ENCODE measurements at regions of chr2 and their contacts with region 1.

Region 1: DNA sequence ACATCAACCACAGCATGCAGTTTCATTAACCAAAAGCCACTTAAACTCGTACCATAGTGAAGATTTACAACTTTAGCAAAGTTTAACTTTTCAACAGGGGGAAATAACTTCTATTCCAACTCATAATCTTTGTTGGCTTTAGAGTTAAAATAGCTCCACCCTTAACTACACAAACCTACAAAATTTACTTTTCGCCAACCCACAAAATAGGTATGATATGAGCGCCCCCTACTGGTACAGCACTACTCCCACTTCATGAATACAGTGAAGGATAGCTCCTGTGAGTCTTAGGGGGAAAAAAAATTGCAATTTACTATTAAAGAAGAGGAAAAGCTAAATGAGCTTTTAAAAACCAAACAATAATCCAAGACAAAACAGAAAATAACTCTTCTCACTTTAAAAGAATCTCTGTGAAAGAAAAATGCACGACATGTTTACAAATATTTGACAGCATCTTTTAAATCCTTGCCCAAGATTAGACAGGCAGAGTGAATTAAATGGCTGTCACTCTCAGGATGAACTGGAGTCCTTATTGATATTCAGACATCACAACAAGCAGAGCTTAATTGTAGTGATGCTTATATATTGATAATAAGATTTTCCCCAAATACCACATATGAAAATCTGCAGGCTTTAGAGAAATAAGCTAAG is 32.2 kb downstream of the TMEFF2 start:
- DNase-seq: peak; percentile 85
- H3K4me3 ChIP-seq: no peak overlapping the region
- H3K27ac ChIP-seq: no peak overlapping the region
- H3K4me1 ChIP-seq: no peaks in the 10 kb centered on the region
- H3K27me3 ChIP-seq: no peaks in the 10 kb centered on the region
- CTCF ChIP-seq: peak; percentile 89

Region 2: GRCh38 chr2:191555092-191555742 is 607.3 kb before region 1 on chr2:
- intact Hi-C with region 1: loop called (anchors 5 kb)
- DNase-seq: peak; percentile 93
- H3K4me3 ChIP-seq: no peak overlapping the region
- H3K27ac ChIP-seq: no peak overlapping the region
- H3K4me1 ChIP-seq: no peaks in the 10 kb centered on the region
- H3K27me3 ChIP-seq: no peaks in the 10 kb centered on the region
- CTCF ChIP-seq: peak; percentile 59

Region 3: GRCh38 chr2:191811807-191812602 is 350.5 kb before region 1 on chr2:
- intact Hi-C with region 1: loop called (anchors 2 kb)
- DNase-seq: peak; percentile 60
- H3K4me3 ChIP-seq: no peak overlapping the region
- H3K27ac ChIP-seq: no peak overlapping the region
- H3K4me1 ChIP-seq: no peaks in the 10 kb centered on the region
- H3K27me3 ChIP-seq: no peaks in the 10 kb centered on the region
- CTCF ChIP-seq: peak; percentile 67

Region 4: DNA sequence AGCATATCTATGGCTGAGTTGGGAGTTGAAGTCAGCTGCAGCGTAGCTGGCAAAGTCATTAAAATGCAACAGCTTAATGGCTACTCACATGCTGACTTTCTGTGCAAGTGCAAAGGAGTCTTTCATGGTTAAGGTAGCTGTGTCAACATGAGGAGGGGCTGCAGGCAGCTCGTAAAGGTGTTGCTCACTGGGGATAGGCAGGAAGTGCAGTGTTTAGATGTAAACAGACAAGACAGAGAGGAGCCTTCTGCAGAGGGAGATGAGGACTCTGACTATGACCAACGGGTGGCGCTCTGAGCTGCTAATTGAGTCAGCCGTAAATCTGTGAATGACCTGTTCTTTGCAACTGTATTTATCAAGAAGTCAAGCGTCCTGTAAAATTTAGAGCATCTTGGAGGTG is 293.3 kb before region 1 on chr2:
- intact Hi-C with region 1: loop called (anchors 5 kb)
- DNase-seq: peak; percentile 58
- H3K4me3 ChIP-seq: no peak overlapping the region
- H3K27ac ChIP-seq: no peak overlapping the region
- H3K4me1 ChIP-seq: no peaks in the 10 kb centered on the region
- H3K27me3 ChIP-seq: no peaks in the 10 kb centered on the region
- CTCF ChIP-seq: no peak

Region 5: DNA sequence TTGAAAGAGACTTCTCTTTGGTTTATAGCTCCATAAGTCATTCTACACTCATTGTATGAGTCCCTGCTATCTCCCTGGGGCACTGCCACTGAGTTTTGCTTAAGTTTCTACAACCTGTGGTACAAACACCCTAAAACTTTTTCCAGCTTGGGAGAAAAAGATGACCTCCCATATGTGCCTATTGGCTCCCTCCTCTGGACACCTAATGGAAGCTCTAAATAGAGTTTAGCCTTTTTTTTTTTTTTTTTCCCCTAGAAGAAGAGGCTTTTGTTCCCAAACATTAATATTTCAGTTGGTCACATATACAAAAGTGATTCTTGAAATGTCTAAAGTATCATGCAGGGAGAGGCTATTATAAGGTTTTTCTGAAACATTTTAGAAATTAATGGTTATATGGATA is 579.4 kb after region 1 on chr2:
- intact Hi-C with region 1: no loop called
- DNase-seq: no peak
- H3K4me3 ChIP-seq: no peak overlapping the region
- H3K27ac ChIP-seq: no peak overlapping the region
- H3K4me1 ChIP-seq: no peaks in the 10 kb centered on the region
- H3K27me3 ChIP-seq: no peaks in the 10 kb centered on the region
- CTCF ChIP-seq: no peak

Region 6: GRCh38 chr2:193712912-193713311 is 1550.4 kb after region 1 on chr2:
- intact Hi-C with region 1: no loop called
- DNase-seq: no peak
- H3K4me3 ChIP-seq: no peak overlapping the region
- H3K27ac ChIP-seq: no peak overlapping the region
- H3K4me1 ChIP-seq: no peaks in the 10 kb centered on the region
- H3K27me3 ChIP-seq: no peaks in the 10 kb centered on the region
- CTCF ChIP-seq: no peak

Measured in colonic mucosa (tissue), 4 donors.